ENCODE measurements at regions of chr5 and their contacts with region 1.

Region 1: DNA sequence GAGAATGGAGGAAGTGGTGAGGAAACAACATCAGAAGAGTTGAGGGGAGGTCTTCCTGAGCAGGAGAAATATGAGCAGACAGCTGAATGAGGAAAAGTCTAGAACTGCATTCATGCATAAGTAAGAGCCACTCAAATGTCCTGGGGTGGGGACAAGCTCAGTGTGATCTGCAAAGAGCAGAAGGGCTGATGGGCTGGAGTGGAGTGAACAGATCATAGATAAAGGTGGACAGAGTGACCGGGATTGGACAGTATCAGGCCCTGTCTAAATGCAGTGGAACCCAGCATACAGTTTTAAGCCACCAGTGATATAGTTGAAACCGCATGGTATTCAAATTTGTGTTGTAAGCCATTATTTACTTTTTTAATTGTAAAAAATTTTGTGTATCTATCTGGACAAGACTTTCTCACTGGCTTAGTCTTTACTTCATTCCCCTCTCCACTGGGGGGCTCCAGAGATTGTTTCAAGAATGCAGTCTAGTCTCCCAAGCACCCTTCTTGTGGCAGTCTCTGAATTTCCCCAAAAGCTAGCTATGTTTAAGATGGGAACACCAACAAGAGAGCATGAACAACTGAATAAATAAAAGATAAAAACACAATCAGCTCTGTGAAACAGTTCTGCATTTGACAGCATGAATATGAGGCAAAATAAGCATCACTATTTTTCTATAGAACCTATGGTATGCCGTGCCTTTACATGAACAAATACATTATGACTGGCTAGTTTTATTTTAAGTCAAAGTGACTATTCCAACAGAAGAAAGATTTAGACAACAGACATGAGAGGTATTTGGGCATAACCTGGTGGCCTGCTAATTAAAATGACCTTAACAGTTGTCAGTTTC is 10.7 kb upstream of the STK32A start:
- DNase-seq: peak; percentile 60
- H3K4me3 ChIP-seq: no peak overlapping the region
- H3K27ac ChIP-seq: no peak overlapping the region
- H3K4me1 ChIP-seq: no peaks in the 10 kb centered on the region
- H3K27me3 ChIP-seq: peaks cover 4% of the 10 kb centered on the region in 2 experiments
- CTCF ChIP-seq: peak; percentile 44 to 64
- POLR2A ChIP-seq: no peak

Region 2: GRCh38 chr5:147339313-147339712 is 115.1 kb after region 1 on chr5:
- CTCF ChIA-PET with region 1: interaction called, 4 read pairs
- POLR2A ChIA-PET with region 1: no interaction called
- dilution Hi-C with region 1: no loop called
- intact Hi-C with region 1: loop called (anchors 1 kb)
- DNase-seq: no peak
- H3K4me3 ChIP-seq: no peak overlapping the region
- H3K27ac ChIP-seq: no peak overlapping the region
- H3K4me1 ChIP-seq: no peaks in the 10 kb centered on the region
- H3K27me3 ChIP-seq: peaks cover 3 to 4% of the 10 kb centered on the region in 2 experiments
- CTCF ChIP-seq: no peak
- POLR2A ChIP-seq: no peak

Region 3: GRCh38 chr5:147391781-147392180 is 167.6 kb after region 1 on chr5:
- CTCF ChIA-PET with region 1: interaction called, 37 read pairs
- POLR2A ChIA-PET with region 1: no interaction called
- dilution Hi-C with region 1: no loop called
- intact Hi-C with region 1: loop called (anchors 1 kb)
- DNase-seq: peak; percentile 80
- H3K4me3 ChIP-seq: no peak overlapping the region
- H3K27ac ChIP-seq: no peak overlapping the region
- H3K4me1 ChIP-seq: peaks cover 12% of the 10 kb centered on the region
- H3K27me3 ChIP-seq: no peaks in the 10 kb centered on the region
- CTCF ChIP-seq: peak; percentile 63 to 73
- POLR2A ChIP-seq: no peak

Measured in endothelial cell of umbilical vein (primary cell).